Lower leg skin (tissue), 4 donors: ENCODE measurements at regions of chr20 and their contacts with region 1.

Region 1: GRCh38 chr20:54097236-54097529 is 26.8 kb upstream of the BCAS1 start:
- DNase-seq: no peak
- H3K4me3 ChIP-seq: no peak overlapping the region
- CTCF ChIP-seq: no peak
- POLR2A ChIP-seq: no peak

Region 2: DNA sequence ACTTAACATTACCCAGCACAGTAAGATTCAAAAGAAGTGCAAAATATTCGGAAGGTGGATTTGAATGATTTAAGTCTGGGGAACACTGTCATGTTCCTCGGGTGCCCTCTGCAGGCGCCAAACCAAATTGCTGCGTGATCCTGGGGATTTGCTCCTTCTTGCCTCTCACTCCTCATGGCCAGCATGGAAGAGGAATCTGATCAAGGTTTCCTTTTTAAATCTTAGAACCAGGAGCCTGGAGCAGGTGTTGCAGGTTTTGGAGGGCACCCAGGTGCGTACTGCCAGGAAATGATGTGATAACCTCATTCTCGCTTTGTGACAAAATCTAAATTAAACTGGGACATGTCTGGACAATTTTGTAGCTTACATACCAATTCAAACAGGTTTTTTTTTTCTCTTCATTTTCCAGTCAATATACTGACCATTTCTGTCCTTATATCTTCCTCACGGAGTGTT is 102.6 kb after region 1 on chr20:
- intact Hi-C with region 1: loop called (anchors 5 kb)
- DNase-seq: peak; percentile 78 to 95
- H3K4me3 ChIP-seq: no peak overlapping the region
- CTCF ChIP-seq: peak in 1 of 3 donors; percentile 60
- POLR2A ChIP-seq: no peak

Region 3: GRCh38 chr20:54649511-54649962 is 552.4 kb after region 1 on chr20:
- intact Hi-C with region 1: loop called (anchors 5 kb)
- DNase-seq: peak; percentile 68 to 93
- H3K4me3 ChIP-seq: no peak overlapping the region
- CTCF ChIP-seq: no peak
- POLR2A ChIP-seq: no peak